Activated CD4-positive, alpha-beta memory T cell treated with anti-CD3 and anti-CD28 coated beads for 36 hours (primary cell): ENCODE measurements at regions of chr6 and their contacts with region 1.

Region 1: GRCh38 chr6:150813319-150813992 is 52.0 kb upstream of the MTHFD1L start:
- DNase-seq: peak; percentile 89
- H3K4me3 Mint-ChIP-seq: peak overlapping the region; percentile 11
- H3K27ac Mint-ChIP-seq: peak overlapping the region; percentile 93
- H3K4me1 Mint-ChIP-seq: peaks cover 27% of the 10 kb centered on the region
- H3K27me3 Mint-ChIP-seq: peaks cover 11% of the 10 kb centered on the region

Region 2: DNA sequence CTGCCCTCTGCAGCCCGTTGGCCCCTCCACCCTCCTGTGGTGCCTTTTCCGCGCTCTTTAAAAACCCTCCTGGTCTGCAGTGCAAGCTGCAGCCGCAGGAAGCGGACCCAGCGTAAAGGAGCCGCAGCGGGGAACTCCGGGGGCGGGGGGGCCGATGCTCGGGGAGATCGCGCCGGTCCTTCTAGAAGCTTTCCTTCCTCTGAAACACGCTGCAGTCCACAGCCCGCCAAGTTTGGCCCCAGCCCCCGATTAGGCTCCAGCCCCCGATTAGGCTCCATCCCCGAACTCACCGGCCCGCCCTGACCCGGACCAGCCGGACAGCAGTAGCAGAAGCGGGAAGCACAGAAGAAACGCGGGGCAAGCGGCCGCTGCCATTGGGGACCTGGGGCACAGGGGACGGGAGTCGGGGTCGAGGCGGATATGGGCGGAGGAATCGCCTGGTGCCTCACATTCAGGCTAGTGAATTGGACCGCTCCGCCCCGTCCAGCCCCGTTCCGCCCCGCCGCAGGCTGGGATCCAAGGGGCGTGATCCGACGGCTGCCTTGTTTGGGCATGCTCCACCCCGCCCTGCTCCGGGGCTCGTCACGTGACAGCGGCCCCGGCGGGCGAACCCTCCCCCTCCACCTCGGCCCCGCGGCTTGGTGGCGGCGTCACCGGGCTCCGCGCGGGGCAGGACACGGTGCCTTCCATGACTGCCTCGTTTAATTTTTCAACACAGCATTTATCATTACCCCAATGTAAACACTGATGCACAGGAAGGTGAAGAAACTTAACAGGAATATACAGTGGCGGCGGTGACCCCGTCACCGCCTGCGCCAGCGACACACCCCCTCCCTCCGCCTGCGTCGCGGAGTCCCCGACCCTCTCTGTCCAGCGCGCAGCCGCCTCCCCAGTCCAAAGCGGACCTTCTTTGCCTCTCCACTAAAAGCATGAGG is 808.4 kb before region 1 on chr6:
- CTCF ChIA-PET with region 1: interaction called, 4 read pairs
- POLR2A ChIA-PET with region 1: interaction called, 7 read pairs
- intact Hi-C with region 1: loop called (anchors 10 kb)
- DNase-seq: peak; percentile 94
- H3K4me3 Mint-ChIP-seq: peak overlapping the region; percentile 80
- H3K27ac Mint-ChIP-seq: peak overlapping the region; percentile 42
- H3K4me1 Mint-ChIP-seq: peaks cover 64% of the 10 kb centered on the region
- H3K27me3 Mint-ChIP-seq: peaks cover 27% of the 10 kb centered on the region

Region 3: DNA sequence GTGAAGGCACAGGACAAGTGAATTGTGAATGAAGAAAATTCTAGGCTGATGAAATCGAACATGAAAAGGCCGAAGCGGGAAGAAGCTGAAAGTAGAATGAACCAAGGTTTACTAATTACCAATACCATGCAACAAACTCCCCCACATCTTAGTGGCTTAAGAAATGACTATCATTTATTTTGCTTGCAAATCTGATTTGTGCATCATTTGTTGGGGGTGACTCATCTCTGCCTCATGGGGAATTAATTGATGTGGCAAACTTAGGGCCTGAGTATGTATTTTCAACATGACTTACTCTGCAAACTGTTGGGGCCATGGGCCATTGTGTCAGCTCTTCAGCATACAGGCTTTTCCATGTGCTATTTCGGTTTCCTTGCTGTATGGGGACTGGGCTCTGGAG is 643.8 kb before region 1 on chr6:
- CTCF ChIA-PET with region 1: no interaction called
- POLR2A ChIA-PET with region 1: no interaction called
- intact Hi-C with region 1: loop called (anchors 2 kb)
- DNase-seq: peak; percentile 71
- H3K4me3 Mint-ChIP-seq: no peak overlapping the region
- H3K27ac Mint-ChIP-seq: peak overlapping the region; percentile 70
- H3K4me1 Mint-ChIP-seq: peaks cover 16% of the 10 kb centered on the region
- H3K27me3 Mint-ChIP-seq: peaks cover 25% of the 10 kb centered on the region

Region 4: DNA sequence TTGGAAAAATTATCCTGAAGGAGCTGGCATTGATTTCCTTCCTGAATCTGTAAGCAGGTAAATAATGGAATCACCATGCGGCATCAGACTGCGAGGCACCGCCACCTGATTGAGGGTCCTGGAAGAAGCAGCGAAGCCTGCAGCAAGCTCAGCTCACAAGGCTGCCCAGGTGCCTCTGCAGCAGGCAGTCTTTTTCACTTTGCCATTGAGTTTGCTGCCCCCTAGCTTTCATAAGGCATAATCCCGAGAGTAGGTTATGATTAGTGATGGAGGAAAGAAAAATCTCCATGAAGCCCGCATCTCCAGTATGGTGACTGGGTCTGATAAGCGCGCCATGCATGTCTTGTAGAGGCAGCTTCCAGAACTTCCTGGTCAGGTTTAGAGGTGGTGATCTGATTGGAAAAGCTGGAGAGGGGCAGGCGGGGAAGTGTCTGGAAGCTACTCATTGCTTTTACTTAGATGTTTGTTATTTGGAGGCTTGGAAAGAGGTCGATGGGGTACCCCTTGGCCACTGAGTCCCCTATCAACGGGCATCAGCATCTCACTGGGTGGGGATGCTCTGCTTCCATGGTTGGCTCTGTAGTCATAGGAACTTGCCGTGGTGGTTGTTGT is 418.0 kb before region 1 on chr6:
- CTCF ChIA-PET with region 1: interaction called, 31 read pairs
- POLR2A ChIA-PET with region 1: no interaction called
- intact Hi-C with region 1: loop called (anchors 5 kb)
- DNase-seq: peak; percentile 46
- H3K4me3 Mint-ChIP-seq: no peak overlapping the region
- H3K27ac Mint-ChIP-seq: no peak overlapping the region
- H3K4me1 Mint-ChIP-seq: no peaks in the 10 kb centered on the region
- H3K27me3 Mint-ChIP-seq: peaks cover 8% of the 10 kb centered on the region

Region 5: DNA sequence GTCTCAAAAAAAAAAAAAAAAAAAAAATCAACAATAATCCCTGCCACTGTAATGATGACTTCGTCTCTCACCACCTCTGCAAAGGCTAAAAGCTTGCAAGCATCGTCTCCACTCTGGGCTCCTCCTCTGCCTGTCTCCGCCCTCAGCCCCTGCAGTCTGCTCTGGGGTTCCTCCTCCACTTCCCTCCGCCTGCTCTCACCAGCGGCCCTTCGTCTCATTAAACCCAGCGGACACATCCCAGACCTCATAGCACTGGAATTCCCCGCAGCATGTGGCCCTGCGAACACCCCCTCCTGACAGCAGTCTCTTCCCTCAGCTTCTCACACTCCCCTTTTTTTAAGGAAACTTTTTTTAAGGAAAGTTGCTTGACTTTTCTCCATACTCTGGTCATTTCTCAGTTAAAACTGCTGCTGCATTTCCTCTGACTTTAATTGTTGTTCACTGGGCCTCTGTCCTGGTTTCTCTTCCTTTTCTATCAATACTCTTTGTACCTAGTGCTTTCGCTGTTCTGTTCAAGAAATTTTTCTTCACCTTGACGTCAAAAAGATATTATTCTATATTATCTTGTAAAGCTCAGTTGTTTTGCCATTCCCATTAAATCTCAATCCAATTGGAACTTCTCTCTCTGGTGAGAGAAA is 284.7 kb before region 1 on chr6:
- CTCF ChIA-PET with region 1: no interaction called
- POLR2A ChIA-PET with region 1: no interaction called
- intact Hi-C with region 1: no loop called
- DNase-seq: no peak
- H3K4me3 Mint-ChIP-seq: no peak overlapping the region
- H3K27ac Mint-ChIP-seq: no peak overlapping the region
- H3K4me1 Mint-ChIP-seq: no peaks in the 10 kb centered on the region
- H3K27me3 Mint-ChIP-seq: peaks cover 3% of the 10 kb centered on the region

Region 6: DNA sequence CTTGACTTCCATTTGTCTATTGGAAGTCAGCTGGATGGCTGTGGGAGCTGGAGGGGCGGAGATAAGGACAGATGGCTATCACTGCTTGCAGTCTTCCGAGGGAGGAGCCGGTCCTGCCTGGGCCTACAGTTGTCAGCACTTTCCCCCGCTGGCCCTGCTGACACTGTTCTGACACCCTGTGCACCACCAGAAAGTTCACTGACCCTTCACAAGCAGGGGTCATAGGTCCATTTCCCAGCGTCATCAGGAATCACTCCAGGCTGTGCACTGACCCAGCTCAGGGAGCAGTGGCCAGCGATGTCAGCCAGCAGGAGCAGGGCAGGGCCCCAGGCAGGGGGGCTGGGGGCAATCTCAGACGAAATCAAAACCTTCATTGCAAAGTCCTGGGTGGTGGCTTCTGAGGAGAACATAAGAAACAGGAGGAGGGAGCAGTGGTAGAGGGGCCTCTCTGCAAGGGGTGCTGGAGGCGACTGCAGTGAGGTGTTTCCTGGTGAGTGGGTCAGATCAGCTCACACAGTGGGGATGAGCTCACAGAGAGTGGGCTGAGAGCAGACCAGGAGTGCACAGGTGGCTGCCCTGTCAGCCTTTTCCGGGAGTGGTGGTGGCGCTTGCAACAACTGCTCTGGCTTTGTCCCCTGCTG is 240.3 kb before region 1 on chr6:
- CTCF ChIA-PET with region 1: no interaction called
- POLR2A ChIA-PET with region 1: no interaction called
- intact Hi-C with region 1: no loop called
- DNase-seq: no peak
- H3K4me3 Mint-ChIP-seq: no peak overlapping the region
- H3K27ac Mint-ChIP-seq: no peak overlapping the region
- H3K4me1 Mint-ChIP-seq: no peaks in the 10 kb centered on the region
- H3K27me3 Mint-ChIP-seq: peaks cover 33% of the 10 kb centered on the region

Region 7: GRCh38 chr6:150600301-150601017 is 213.0 kb before region 1 on chr6:
- CTCF ChIA-PET with region 1: interaction called, 6 read pairs
- POLR2A ChIA-PET with region 1: interaction called, 13 read pairs
- intact Hi-C with region 1: loop called (anchors 1 kb)
- DNase-seq: peak; percentile 89
- H3K4me3 Mint-ChIP-seq: peak overlapping the region; percentile 84
- H3K27ac Mint-ChIP-seq: peak overlapping the region; percentile 88
- H3K4me1 Mint-ChIP-seq: peaks cover 19% of the 10 kb centered on the region
- H3K27me3 Mint-ChIP-seq: peaks cover 48% of the 10 kb centered on the region

Region 8: GRCh38 chr6:150685860-150686259 is 127.6 kb before region 1 on chr6:
- CTCF ChIA-PET with region 1: interaction called, 21 read pairs
- POLR2A ChIA-PET with region 1: no interaction called
- intact Hi-C with region 1: loop called (anchors 1 kb)
- DNase-seq: peak; percentile 73
- H3K4me3 Mint-ChIP-seq: no peak overlapping the region
- H3K27ac Mint-ChIP-seq: no peak overlapping the region
- H3K4me1 Mint-ChIP-seq: no peaks in the 10 kb centered on the region
- H3K27me3 Mint-ChIP-seq: peaks cover 1% of the 10 kb centered on the region

Region 9: GRCh38 chr6:150981095-150981494 is 167.6 kb after region 1 on chr6:
- CTCF ChIA-PET with region 1: no interaction called
- POLR2A ChIA-PET with region 1: no interaction called
- intact Hi-C with region 1: no loop called
- DNase-seq: no peak
- H3K4me3 Mint-ChIP-seq: no peak overlapping the region
- H3K27ac Mint-ChIP-seq: no peak overlapping the region
- H3K4me1 Mint-ChIP-seq: peaks cover 2% of the 10 kb centered on the region
- H3K27me3 Mint-ChIP-seq: no peaks in the 10 kb centered on the region

Region 10: DNA sequence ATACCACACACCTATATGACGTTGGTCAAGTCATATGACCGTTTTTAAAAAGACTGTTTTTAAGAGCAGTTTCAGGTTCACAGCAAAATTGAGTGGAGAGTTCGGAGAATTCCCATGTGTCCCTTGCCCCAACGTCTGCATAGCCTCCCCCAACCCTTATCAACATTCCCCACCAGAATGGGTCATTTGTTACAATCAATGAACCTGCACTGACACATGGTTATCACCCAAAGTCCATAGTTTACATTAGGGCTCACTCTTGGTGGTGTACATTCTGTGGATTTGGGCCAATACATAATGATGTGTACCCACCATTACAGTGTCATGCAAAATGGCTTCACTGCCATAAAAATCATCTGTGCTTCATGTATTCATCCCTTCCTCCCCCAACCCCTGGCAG is 525.9 kb after region 1 on chr6:
- CTCF ChIA-PET with region 1: interaction called, 5 read pairs
- POLR2A ChIA-PET with region 1: no interaction called
- intact Hi-C with region 1: loop called (anchors 5 kb)
- DNase-seq: no peak
- H3K4me3 Mint-ChIP-seq: no peak overlapping the region
- H3K27ac Mint-ChIP-seq: no peak overlapping the region
- H3K4me1 Mint-ChIP-seq: no peaks in the 10 kb centered on the region
- H3K27me3 Mint-ChIP-seq: no peaks in the 10 kb centered on the region